ENCODE measurements at regions of chr11 and their contacts with region 1.

Region 1: DNA sequence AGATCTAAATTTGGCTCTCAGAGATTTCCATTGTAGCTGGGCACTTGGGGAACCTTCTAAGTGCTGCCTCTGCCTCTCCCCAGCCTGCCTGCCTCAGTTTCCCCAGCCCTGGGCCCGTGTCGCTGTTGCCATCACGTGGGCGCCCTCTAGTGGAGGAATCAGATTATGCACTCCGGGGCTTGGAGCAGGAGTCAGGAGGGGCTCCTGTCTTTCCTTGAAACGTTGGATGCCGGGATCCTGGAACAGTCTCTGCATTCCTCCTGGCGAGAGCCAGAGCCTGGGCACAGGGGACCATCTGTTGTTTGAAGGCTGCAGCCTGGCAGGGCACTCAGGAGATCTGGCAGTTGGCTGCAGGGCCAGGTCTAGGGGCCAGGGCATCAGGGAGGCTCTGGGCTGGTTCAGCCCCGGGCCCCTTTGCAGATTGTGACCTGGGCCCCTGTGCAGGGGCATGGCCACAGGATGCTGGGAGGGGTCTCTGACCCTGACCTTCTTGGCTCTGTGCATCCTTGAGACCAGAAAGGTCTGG is 71.6 kb downstream of the LRP5 start:
- DNase-seq: peak in 41 of 42 donors; percentile 38 to 89 (median 73)

Region 2: GRCh38 chr11:68257475-68258362 is 126.3 kb before region 1 on chr11:
- intact Hi-C with region 1: loop called (anchors 5 kb)
- DNase-seq: peak; percentile 90 to 100 (median 97)

Region 3: DNA sequence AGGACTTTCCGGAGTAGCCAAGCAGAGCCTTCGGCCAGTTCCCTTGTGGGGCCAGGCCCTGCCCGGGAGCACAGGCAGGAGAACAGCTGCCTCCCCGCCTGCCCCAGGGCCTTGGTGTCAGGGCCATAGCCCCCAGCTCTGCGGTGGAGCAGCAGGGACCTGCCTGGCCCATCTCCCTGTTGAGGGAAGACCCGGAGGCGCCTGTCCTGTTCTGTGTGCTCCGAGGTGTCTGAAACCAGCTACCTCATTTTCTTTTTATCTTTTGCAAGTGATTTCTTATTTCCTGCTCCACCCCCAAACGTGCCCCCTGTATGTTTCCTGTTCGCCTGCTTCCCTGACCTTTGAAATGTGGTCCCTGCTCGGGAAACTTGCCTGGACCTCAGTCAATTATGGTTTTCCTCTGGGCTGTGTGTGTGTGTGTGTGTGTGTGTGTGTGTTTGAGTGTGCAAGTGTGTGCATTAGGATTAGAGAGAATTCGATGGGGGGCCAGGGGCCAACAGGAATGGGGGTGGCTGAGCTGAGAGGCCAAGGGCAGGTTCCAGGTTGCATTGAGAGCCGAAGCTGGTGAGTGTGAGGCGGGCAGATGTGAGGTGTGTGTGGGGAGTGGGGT is 52.6 kb before region 1 on chr11:
- intact Hi-C with region 1: loop called (anchors 2 kb)
- DNase-seq: no peak

Region 4: DNA sequence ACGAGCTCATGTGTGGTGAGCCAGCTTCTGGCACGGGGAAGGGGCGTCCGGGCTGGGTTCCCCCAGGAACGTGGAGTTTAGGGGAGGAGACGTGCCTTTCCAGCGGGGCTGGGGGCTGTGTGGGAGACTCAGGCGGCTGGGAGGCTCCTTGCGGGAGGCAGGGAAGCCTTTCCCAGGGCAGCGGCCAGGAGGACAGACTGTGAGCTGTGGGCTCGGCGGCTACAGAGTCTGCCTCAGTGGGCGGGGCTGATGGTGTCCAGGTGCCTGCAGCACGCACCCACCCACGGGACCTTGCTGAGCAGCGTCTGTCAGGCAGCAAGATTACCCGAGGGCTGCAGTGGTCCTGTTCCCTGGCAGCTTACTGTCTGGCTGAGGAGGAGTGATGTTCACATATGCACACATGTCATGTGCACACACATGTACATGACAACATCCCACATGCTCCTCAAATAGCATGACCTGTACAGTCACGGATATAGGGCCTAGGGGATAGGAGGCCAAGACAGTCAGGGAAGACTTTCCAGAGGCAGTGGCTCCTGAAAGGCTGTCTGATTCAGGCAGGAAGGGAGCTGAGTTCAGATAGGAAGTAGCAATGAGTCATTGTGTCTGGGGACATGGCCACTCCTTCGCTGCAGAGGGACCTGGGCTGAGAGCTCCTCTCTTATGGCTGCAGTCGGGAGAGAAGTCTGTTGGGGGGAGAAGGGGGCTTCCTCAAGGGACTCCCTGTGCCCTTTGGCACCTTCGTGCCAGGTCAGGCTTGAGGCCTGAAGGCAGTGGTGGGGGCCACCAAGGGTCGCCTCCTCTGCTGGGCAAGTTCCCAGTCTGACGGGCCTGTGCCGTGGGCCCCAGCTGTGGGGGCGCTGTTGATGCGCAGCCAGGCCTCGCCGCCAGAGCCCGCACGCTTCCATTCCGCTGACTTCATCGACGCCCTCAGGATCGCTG is 53.2 kb after region 1 on chr11:
- intact Hi-C with region 1: no loop called
- DNase-seq: no peak

Region 5: DNA sequence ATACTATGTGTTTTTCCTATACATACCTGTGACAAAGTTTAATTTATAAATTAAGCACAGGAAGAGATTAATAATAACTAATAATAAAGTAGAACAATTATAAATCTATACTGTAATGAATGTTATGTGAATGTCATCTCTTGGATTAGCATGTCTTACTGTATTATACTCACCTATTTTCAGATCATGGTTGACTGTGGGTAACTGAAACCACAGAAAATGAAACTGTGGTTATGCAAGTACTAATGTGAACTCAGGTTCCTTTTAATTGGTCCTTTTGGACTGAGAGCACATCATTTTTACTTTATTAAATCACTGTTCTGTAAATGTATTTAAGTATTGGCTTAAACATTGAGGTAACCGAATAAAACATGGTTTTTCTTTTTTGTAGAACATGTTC is 185.3 kb after region 1 on chr11:
- intact Hi-C with region 1: no loop called
- DNase-seq: no peak

Measured in head of caudate nucleus (tissue), 42 donors.